Activated CD4-positive, alpha-beta memory T cell treated with anti-CD3 and anti-CD28 coated beads for 36 hours (primary cell): ENCODE measurements at regions of chr5 and their contacts with region 1.

Region 1: DNA sequence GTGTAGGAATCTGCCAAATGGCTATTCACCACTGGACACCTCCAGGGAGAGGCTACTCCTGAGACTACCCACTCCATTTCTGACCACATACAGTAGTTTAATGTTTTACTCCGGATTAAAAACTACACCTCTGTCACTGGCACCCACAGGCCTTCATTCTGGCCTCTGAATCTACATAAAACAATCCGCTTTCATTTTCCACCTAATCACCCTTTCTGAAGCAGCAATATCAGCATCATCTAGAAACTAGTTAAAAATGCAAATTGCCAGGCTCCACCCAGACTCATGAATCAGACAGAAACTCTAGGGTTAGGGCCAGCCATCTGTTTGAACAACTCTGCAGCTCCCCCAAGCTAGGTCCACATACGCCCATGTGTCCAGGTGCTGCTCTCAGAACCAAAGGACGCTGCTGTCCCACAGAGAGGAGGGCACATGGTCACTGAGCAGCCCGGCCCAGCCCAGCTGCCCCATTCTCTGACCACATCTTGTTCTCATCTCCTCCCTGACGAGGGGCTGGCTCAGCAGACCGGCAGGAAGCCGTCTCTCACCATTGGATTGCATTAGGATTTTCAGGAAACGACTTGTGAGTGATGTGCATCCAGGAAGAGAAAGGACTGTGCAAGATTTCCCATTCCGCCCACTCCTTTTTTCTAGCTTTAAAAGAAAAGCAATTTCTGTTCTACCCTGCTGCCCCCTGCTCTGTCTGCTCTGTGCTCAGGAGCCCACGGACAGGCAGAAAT is 34.7 kb downstream of the ADAM19 start:
- DNase-seq: peak; percentile 74
- H3K4me3 Mint-ChIP-seq: peak overlapping the region; percentile 65
- H3K27ac Mint-ChIP-seq: peak overlapping the region; percentile 98
- H3K4me1 Mint-ChIP-seq: peaks cover 87% of the 10 kb centered on the region
- H3K27me3 Mint-ChIP-seq: no peaks in the 10 kb centered on the region

Region 2: DNA sequence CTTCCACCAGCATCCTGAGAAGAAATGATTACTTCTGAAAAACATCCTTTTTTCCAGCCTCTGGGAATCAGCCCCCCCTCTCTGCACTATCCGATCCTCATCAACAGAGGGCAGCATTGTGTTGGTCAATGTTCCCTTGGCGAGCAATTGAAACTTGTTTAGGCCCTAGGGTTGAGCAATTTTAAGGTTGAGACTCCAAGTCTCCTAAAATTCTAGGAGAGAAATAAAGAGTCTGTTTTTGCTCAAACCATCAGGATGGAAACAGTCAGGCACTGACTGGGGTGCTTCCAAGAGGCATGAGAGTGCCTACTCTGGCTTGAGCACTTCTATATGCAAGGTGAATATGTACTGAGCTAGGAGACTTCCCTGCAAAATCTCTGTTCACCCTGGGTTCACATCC is 287.3 kb before region 1 on chr5:
- CTCF ChIA-PET with region 1: no interaction called
- POLR2A ChIA-PET with region 1: no interaction called
- intact Hi-C with region 1: loop called (anchors 10 kb)
- DNase-seq: no peak
- H3K4me3 Mint-ChIP-seq: peak overlapping the region; percentile 39
- H3K27ac Mint-ChIP-seq: peak overlapping the region; percentile 96
- H3K4me1 Mint-ChIP-seq: peaks cover 92% of the 10 kb centered on the region
- H3K27me3 Mint-ChIP-seq: no peaks in the 10 kb centered on the region

Region 3: DNA sequence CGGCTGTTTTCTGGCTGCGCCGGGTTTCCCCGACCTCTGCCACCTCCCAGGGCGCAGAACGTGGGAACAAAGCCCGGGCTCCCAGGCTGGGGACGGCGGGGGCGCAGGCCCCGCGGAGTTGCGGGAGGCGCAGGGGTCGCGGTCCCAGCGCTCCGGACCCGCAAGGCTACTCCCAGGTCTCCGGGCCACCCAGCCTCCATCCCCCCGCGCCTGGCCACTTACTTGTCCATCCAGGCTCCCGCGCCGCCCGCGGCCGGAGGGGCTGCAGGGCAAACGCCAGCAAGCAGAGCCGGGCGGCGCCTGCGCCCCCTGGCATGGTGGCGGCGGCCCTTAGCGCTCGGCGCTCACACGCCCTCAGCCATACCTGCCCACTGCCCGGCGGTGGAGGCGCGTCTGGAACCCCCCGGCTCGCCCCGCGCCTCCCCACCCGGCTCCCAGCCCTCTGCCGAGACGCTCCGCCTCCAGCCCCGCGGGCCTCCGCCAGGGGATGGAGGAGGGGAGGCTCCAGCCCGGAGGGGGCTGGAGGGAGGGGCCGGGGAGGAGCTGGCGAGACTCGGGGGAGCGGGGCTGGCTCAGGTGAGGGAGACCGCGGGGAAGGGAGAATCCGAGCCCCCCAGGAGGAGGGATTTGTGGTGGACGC is 34.6 kb after region 1 on chr5 and contains the start of gene ADAM19:
- CTCF ChIA-PET with region 1: interaction called, 8 read pairs
- POLR2A ChIA-PET with region 1: interaction called, 6 read pairs
- intact Hi-C with region 1: loop called (anchors 1 kb)
- DNase-seq: peak; percentile 67
- H3K4me3 Mint-ChIP-seq: peak within 1 kb of the TSS; percentile 92
- H3K27ac Mint-ChIP-seq: peak within 1 kb of the TSS; percentile 87
- H3K4me1 Mint-ChIP-seq: peaks cover 60% of the 10 kb centered on the region
- H3K27me3 Mint-ChIP-seq: no peaks in the 10 kb centered on the region
- total RNA-seq, gene ADAM19: 107 to 111 TPM

Region 4: GRCh38 chr5:157603333-157604190 is 62.7 kb after region 1 on chr5:
- CTCF ChIA-PET with region 1: interaction called, 4 read pairs
- POLR2A ChIA-PET with region 1: interaction called, 14 read pairs
- intact Hi-C with region 1: loop called (anchors 1 kb)
- DNase-seq: peak; percentile 83
- H3K4me3 Mint-ChIP-seq: peak overlapping the region; percentile 18
- H3K27ac Mint-ChIP-seq: peak overlapping the region; percentile 90
- H3K4me1 Mint-ChIP-seq: peaks cover 93% of the 10 kb centered on the region
- H3K27me3 Mint-ChIP-seq: no peaks in the 10 kb centered on the region

Region 5: GRCh38 chr5:157710872-157711271 is 170.0 kb after region 1 on chr5:
- CTCF ChIA-PET with region 1: no interaction called
- POLR2A ChIA-PET with region 1: no interaction called
- intact Hi-C with region 1: loop called (anchors 2 kb)
- DNase-seq: no peak
- H3K4me3 Mint-ChIP-seq: no peak overlapping the region
- H3K27ac Mint-ChIP-seq: no peak overlapping the region
- H3K4me1 Mint-ChIP-seq: peaks cover 16% of the 10 kb centered on the region
- H3K27me3 Mint-ChIP-seq: peaks cover 1% of the 10 kb centered on the region

Region 6: DNA sequence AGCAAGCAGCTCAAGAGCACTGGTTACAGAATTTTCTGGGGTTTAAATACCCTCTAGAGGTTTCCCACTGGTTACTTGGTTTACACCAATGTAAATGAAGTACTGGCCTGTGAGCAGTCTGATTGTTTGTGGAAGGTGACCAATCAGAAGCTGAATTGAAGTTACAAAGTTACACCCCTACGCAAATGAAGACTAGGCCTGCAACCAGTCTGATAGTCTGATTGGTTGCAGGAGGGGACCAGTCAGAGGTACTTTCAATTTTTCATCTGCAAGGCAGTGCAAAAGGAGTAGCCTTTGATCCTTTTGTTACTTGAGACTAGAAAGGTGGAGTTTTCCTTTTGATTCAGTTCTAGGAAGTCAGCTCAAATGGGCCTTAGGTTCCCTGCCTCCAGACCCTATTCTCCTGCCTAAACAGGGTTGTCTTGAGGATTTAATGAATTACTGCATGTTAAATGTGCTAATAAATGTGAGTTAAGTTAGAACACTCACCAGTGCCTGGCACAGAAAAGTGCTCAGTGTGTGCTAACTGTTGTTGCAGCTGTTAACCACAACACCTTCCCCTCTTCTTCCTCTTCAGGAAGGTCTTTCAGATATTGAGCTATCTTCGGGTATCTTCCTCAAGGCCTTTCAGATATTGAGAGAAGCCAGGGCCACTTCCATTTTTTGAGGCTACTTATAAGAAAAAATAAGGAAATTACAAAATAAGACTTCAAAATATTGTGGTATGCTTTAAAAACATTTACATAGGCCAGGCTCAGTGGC is 350.1 kb after region 1 on chr5:
- CTCF ChIA-PET with region 1: no interaction called
- POLR2A ChIA-PET with region 1: no interaction called
- intact Hi-C with region 1: no loop called
- DNase-seq: no peak
- H3K4me3 Mint-ChIP-seq: no peak overlapping the region
- H3K27ac Mint-ChIP-seq: no peak overlapping the region
- H3K4me1 Mint-ChIP-seq: peaks cover 19% of the 10 kb centered on the region
- H3K27me3 Mint-ChIP-seq: no peaks in the 10 kb centered on the region